H1 (cell line): ENCODE measurements at regions of chr12 and their contacts with region 1.

Region 1: DNA sequence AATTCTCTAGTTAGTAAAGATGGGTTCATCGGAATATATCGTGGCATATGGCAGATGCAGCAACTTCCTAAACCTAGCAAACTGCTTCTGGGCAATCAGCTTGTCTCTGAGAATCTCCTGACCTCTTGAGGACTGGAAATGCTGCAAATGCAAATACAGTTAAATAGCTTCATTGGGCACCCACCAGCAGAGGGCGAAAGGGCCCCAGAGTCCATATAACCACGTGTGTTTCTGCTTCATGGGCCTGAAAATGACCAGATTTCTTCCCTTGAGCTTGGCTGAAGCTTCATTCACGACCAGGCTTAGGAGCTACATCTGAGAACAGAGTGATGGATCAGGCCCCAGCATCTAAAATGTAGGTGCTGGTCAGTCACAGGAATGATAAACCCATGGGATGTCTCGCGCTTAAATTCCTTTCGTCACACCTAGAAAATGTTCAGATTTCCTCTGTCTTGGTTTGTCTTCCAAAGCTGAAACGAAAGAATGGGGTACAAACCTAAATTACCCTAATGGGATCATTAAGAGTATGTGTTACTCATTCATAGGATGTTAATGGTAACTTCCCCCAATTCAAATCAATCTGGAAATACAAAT is 1482.5 kb upstream of the TMEM132C start:
- DNase-seq: peak; percentile 58 to 83
- H3K4me3 ChIP-seq: no peak overlapping the region
- H3K27ac ChIP-seq: no peak overlapping the region
- H3K4me1 ChIP-seq: no peaks in the 10 kb centered on the region
- H3K27me3 ChIP-seq: no peaks in the 10 kb centered on the region
- CTCF ChIP-seq: peak; percentile 54 to 94 (median 89)
- EP300 ChIP-seq: no peak
- POLR2A ChIP-seq: no peak
- RAD21 ChIP-seq: peak; percentile 75 to 82

Region 2: DNA sequence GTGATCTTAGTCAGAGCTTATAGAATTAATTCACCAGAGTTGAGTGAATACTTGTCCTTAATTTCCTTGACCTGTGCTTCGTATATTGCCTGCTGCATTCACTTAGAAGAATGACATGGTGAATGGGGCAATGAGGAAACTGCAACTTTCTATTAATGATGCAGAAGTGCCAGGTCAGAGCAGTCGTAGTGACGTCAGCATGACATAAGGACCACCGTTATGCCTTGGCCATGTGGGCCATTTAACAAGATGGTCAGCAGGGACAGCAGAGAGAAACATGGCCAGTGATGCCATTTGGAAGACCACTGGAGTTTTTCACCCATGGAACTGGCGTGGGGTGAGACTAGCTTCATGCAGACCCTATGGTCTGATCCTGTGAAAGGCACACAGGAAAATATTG is 13.1 kb after region 1 on chr12:
- CTCF ChIA-PET with region 1: interaction called, 28 read pairs
- POLR2A ChIA-PET with region 1: no interaction called
- DNase-seq: no peak
- H3K4me3 ChIP-seq: no peak overlapping the region
- H3K27ac ChIP-seq: no peak overlapping the region
- H3K4me1 ChIP-seq: no peaks in the 10 kb centered on the region
- H3K27me3 ChIP-seq: no peaks in the 10 kb centered on the region
- CTCF ChIP-seq: no peak
- EP300 ChIP-seq: no peak
- POLR2A ChIP-seq: no peak
- RAD21 ChIP-seq: no peak

Region 3: DNA sequence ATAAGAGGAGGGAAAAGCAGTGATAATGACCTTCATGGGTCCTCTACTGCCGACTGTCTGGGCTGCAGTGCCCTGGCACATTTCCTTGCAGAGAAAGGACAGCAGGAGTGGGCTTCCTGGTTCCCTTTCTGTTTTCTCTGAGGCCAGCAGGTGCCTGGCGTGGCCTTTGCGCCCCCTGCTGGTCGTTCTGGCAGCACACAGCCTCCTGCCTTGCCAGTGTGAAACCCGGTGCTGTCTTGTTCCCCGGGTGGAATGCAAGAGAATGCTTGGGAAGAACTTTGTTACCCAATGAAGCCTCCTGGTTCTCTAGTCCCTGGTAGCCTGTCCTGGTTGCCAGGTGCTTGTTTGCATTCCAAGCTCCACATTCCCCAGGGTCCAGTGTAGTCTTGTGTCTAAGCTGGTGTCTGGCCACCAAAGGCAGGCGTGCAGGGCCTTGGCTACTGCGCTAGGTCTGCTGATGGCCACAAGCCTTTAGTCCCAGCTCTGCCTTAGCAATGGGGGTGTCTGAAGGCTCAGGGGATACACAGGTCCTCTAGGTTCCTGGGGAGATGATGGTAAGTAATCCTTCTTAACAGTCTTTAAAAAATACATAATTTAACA is 90.1 kb after region 1 on chr12:
- CTCF ChIA-PET with region 1: interaction called, 50 read pairs
- POLR2A ChIA-PET with region 1: no interaction called
- DNase-seq: peak; percentile 74 to 89
- H3K4me3 ChIP-seq: no peak overlapping the region
- H3K27ac ChIP-seq: no peak overlapping the region
- H3K4me1 ChIP-seq: no peaks in the 10 kb centered on the region
- H3K27me3 ChIP-seq: no peaks in the 10 kb centered on the region
- CTCF ChIP-seq: peak; percentile 95 to 97 (median 97)
- EP300 ChIP-seq: no peak
- POLR2A ChIP-seq: no peak
- RAD21 ChIP-seq: peak; percentile 88 to 91

Region 4: GRCh38 chr12:127355061-127355841 is 570.8 kb after region 1 on chr12:
- CTCF ChIA-PET with region 1: interaction called, 10 read pairs
- POLR2A ChIA-PET with region 1: no interaction called
- DNase-seq: peak in 1 of 2 experiments; percentile 53
- H3K4me3 ChIP-seq: no peak overlapping the region
- H3K27ac ChIP-seq: no peak overlapping the region
- H3K4me1 ChIP-seq: no peaks in the 10 kb centered on the region; a peak in 1 of 7 replicates
- H3K27me3 ChIP-seq: no peaks in the 10 kb centered on the region
- CTCF ChIP-seq: peak; percentile 76 to 83 (median 77)
- EP300 ChIP-seq: no peak
- POLR2A ChIP-seq: no peak
- RAD21 ChIP-seq: peak; percentile 76 to 81